Naive thymus-derived CD4-positive, alpha-beta T cell (primary cell): ENCODE measurements at regions of chr4 and their contacts with region 1.

Region 1: GRCh38 chr4:58760737-58761136 is 1650.6 kb upstream of the IGFBP7 start:
- DNase-seq: no peak
- ATAC-seq: no peak
- H3K4me3 ChIP-seq: no peak overlapping the region
- H3K4me3 Mint-ChIP-seq: no peak overlapping the region
- H3K27ac ChIP-seq: no peak overlapping the region
- H3K27ac Mint-ChIP-seq: no peak overlapping the region
- H3K4me1 ChIP-seq: no peaks in the 10 kb centered on the region
- H3K4me1 Mint-ChIP-seq: no peaks in the 10 kb centered on the region
- H3K27me3 ChIP-seq: no peaks in the 10 kb centered on the region
- H3K27me3 Mint-ChIP-seq: no peaks in the 10 kb centered on the region

Region 2: DNA sequence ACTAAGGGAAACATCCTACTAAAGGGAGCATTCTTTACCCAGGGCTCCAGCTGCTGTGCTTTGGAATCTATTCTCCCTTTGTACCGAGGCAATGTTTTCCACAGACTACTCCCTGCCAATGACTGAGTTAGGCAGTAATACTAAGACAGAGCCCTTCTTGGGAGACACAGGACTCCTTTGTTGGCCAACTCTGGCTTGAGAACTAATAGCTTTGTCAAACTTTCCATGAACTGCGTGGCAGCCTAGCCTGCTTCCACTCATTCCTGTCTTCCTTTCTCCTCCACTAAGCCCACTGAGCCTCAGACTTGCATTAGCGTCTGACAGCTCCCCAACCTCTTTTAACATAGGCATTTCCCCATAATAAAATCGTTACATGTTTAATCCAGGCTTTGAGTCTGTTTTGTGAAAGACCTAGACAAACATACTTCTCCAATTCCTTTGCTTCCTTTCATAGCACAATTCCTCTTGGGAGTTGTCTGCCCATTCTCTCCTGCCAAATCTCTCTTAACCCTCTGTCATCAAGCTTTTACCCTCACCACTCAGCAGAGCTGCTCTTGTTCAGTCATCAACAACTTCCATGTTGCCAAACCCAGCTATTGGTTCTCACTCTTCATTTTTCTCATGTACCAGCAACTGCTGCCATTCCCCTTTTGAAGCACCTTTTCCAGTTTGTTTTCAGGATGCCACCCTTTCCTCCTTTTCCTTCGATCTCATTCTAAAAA is 1350.2 kb before region 1 on chr4:
- CTCF ChIA-PET with region 1: no interaction called
- POLR2A ChIA-PET with region 1: no interaction called
- intact Hi-C with region 1: no loop called
- DNase-seq: no peak
- ATAC-seq: no peak
- H3K4me3 ChIP-seq: no peak overlapping the region
- H3K4me3 Mint-ChIP-seq: no peak overlapping the region
- H3K27ac ChIP-seq: no peak overlapping the region
- H3K27ac Mint-ChIP-seq: no peak overlapping the region
- H3K4me1 ChIP-seq: no peaks in the 10 kb centered on the region
- H3K4me1 Mint-ChIP-seq: no peaks in the 10 kb centered on the region
- H3K27me3 ChIP-seq: no peaks in the 10 kb centered on the region
- H3K27me3 Mint-ChIP-seq: no peaks in the 10 kb centered on the region

Region 3: GRCh38 chr4:58825277-58825676 is 64.5 kb after region 1 on chr4:
- CTCF ChIA-PET with region 1: no interaction called
- POLR2A ChIA-PET with region 1: no interaction called
- intact Hi-C with region 1: loop called in 1 of 2 experiments (anchors 10 kb)
- DNase-seq: no peak
- ATAC-seq: no peak
- H3K4me3 ChIP-seq: no peak overlapping the region
- H3K4me3 Mint-ChIP-seq: no peak overlapping the region
- H3K27ac ChIP-seq: no peak overlapping the region
- H3K27ac Mint-ChIP-seq: no peak overlapping the region
- H3K4me1 ChIP-seq: no peaks in the 10 kb centered on the region
- H3K4me1 Mint-ChIP-seq: no peaks in the 10 kb centered on the region
- H3K27me3 ChIP-seq: no peaks in the 10 kb centered on the region
- H3K27me3 Mint-ChIP-seq: no peaks in the 10 kb centered on the region